B cell (primary cell): ENCODE measurements at regions of chr7 and their contacts with region 1.

Region 1: DNA sequence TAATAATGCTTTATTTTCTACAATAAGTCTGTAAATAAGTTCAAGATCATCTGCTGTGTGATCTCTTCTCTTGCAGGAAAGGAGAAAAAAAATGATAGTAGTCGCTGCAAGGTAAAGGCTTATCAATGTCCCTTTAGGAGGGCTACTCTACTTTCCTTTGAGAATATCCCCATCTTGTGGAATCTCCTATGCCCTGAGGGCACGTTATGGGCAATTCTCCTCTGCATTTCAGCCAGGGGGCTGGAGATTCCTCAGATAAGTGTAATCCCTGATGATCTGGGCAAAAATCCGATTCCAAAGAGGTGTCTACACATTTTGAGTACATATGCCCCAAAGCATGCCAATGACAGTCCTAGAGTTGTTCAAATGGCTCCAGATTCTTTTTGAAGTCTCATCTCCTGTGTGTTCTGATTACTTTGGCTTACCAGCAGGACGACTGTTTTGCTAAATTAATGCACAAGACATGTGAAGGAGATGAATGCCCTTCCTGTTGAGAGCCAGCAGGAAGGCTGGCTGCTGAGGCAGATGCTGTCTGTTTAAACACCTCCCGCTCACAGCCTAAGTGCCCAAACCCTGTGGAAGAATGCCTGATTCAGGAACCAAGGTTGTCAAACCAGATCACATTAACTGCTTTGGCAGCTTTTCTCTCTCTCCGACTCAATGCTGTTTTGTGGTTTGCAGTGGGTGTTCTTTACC is 171.2 kb upstream of the COL1A2 start:
- DNase-seq: peak; percentile 32
- ATAC-seq: peak; percentile 45
- H3K4me3 ChIP-seq: no peak overlapping the region
- H3K4me3 Mint-ChIP-seq: no peak overlapping the region
- H3K27ac ChIP-seq: no peak overlapping the region
- H3K27ac Mint-ChIP-seq: no peak overlapping the region
- H3K4me1 ChIP-seq: no peaks in the 10 kb centered on the region
- H3K4me1 Mint-ChIP-seq: no peaks in the 10 kb centered on the region
- H3K27me3 ChIP-seq: peaks cover 0 to 2% (median 0%) of the 10 kb centered on the region in 4 experiments
- H3K27me3 Mint-ChIP-seq: no peaks in the 10 kb centered on the region
- CTCF ChIP-seq: peak; percentile 45

Region 2: GRCh38 chr7:93245525-93246432 is 977.7 kb before region 1 on chr7:
- CTCF ChIA-PET with region 1: no interaction called
- POLR2A ChIA-PET with region 1: no interaction called
- intact Hi-C with region 1: loop called (anchors 5 kb)
- DNase-seq: peak; percentile 54
- ATAC-seq: peak; percentile 28
- H3K4me3 ChIP-seq: no peak overlapping the region
- H3K4me3 Mint-ChIP-seq: no peak overlapping the region
- H3K27ac ChIP-seq: no peak overlapping the region
- H3K27ac Mint-ChIP-seq: no peak overlapping the region
- H3K4me1 ChIP-seq: no peaks in the 10 kb centered on the region
- H3K4me1 Mint-ChIP-seq: peaks cover 6% of the 10 kb centered on the region
- H3K27me3 ChIP-seq: no peaks in the 10 kb centered on the region
- H3K27me3 Mint-ChIP-seq: no peaks in the 10 kb centered on the region
- CTCF ChIP-seq: peak; percentile 86

Region 3: GRCh38 chr7:93715234-93715633 is 508.3 kb before region 1 on chr7:
- CTCF ChIA-PET with region 1: interaction called, 6 read pairs
- POLR2A ChIA-PET with region 1: no interaction called
- intact Hi-C with region 1: loop called (anchors 2 kb)
- DNase-seq: peak; percentile 40
- ATAC-seq: no peak
- H3K4me3 ChIP-seq: no peak overlapping the region
- H3K4me3 Mint-ChIP-seq: no peak overlapping the region
- H3K27ac ChIP-seq: no peak overlapping the region
- H3K27ac Mint-ChIP-seq: no peak overlapping the region
- H3K4me1 ChIP-seq: no peaks in the 10 kb centered on the region
- H3K4me1 Mint-ChIP-seq: no peaks in the 10 kb centered on the region
- H3K27me3 ChIP-seq: peaks cover 0 to 9% (median 0%) of the 10 kb centered on the region in 4 experiments
- H3K27me3 Mint-ChIP-seq: peaks cover 28% of the 10 kb centered on the region
- CTCF ChIP-seq: peak; percentile 46

Region 4: GRCh38 chr7:93883078-93883916 is 340.2 kb before region 1 on chr7:
- CTCF ChIA-PET with region 1: no interaction called
- POLR2A ChIA-PET with region 1: no interaction called
- intact Hi-C with region 1: loop called (anchors 5 kb)
- DNase-seq: peak; percentile 8
- ATAC-seq: no peak
- H3K4me3 ChIP-seq: no peak overlapping the region
- H3K4me3 Mint-ChIP-seq: no peak overlapping the region
- H3K27ac ChIP-seq: no peak overlapping the region
- H3K27ac Mint-ChIP-seq: no peak overlapping the region
- H3K4me1 ChIP-seq: no peaks in the 10 kb centered on the region
- H3K4me1 Mint-ChIP-seq: no peaks in the 10 kb centered on the region
- H3K27me3 ChIP-seq: peaks cover 0 to 6% (median 0%) of the 10 kb centered on the region in 4 experiments
- H3K27me3 Mint-ChIP-seq: peaks cover 18% of the 10 kb centered on the region
- CTCF ChIP-seq: peak; percentile 14

Region 5: GRCh38 chr7:94111009-94111408 is 112.5 kb before region 1 on chr7:
- CTCF ChIA-PET with region 1: no interaction called
- POLR2A ChIA-PET with region 1: no interaction called
- intact Hi-C with region 1: loop called (anchors 10 kb)
- DNase-seq: no peak
- ATAC-seq: no peak
- H3K4me3 ChIP-seq: no peak overlapping the region
- H3K4me3 Mint-ChIP-seq: no peak overlapping the region
- H3K27ac ChIP-seq: no peak overlapping the region
- H3K27ac Mint-ChIP-seq: no peak overlapping the region
- H3K4me1 ChIP-seq: no peaks in the 10 kb centered on the region
- H3K4me1 Mint-ChIP-seq: no peaks in the 10 kb centered on the region
- H3K27me3 ChIP-seq: no peaks in the 10 kb centered on the region
- H3K27me3 Mint-ChIP-seq: no peaks in the 10 kb centered on the region
- CTCF ChIP-seq: no peak